K562 (cell line): ENCODE measurements at regions of chr12 and their contacts with region 1.

Region 1: GRCh38 chr12:48189331-48190125 is 6.1 kb downstream of the CCDC184 start:
- DNase-seq: peak; percentile 68 to 84 (median 68)
- ATAC-seq: peak; percentile 87
- H3K4me3 ChIP-seq: no peak overlapping the region
- H3K27ac ChIP-seq: no peak overlapping the region
- H3K4me1 ChIP-seq: peaks cover 0 to 1% of the 10 kb centered on the region in 2 experiments; a peak in 2 of 5 replicates
- H3K27me3 ChIP-seq: peaks cover 20 to 26% of the 10 kb centered on the region in 2 experiments; a peak in 4 of 5 replicates
- CTCF ChIP-seq: peak; percentile 78 to 90 (median 81)
- EP300 ChIP-seq: no peak
- POLR2A ChIP-seq: no peak
- RAD21 ChIP-seq: peak; percentile 79 to 90

Region 2: GRCh38 chr12:47949441-47950308 is 239.9 kb before region 1 on chr12:
- CTCF ChIA-PET with region 1: no interaction called
- POLR2A ChIA-PET with region 1: interaction called, 3 read pairs
- in situ Hi-C with region 1: no loop called
- intact Hi-C with region 1: loop called (anchors 2 kb)
- DNase-seq: peak; percentile 83 to 86 (median 84)
- ATAC-seq: peak; percentile 96
- H3K4me3 ChIP-seq: no peak overlapping the region
- H3K27ac ChIP-seq: no peak overlapping the region
- H3K4me1 ChIP-seq: peaks cover 0 to 11% of the 10 kb centered on the region in 2 experiments; a peak in 3 of 5 replicates
- H3K27me3 ChIP-seq: peaks cover 6 to 49% of the 10 kb centered on the region in 2 experiments; a peak in 3 of 5 replicates
- CTCF ChIP-seq: peak; percentile 88 to 92 (median 92)
- EP300 ChIP-seq: no peak
- POLR2A ChIP-seq: no peak
- RAD21 ChIP-seq: peak; percentile 78 to 87

Region 3: DNA sequence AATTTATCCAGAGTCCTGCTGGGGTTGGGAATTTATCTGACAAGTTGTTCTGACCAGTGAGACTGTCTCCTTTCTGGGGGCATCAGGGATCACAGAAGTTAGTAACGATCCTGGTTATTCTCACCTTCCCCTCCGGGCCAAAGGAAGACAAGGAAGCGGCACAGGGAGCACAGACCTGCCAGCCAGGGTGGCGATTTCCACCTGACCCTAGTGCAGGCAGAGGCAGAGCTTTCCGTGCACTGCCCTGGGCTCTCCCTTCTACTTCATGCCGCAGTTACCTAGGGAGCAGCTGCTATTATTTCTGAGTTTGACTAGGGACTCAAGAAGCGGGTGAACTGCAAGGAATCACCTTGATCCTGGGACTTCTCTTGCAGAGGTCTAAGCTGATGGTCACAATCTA is 218.7 kb before region 1 on chr12:
- CTCF ChIA-PET with region 1: no interaction called
- POLR2A ChIA-PET with region 1: no interaction called
- in situ Hi-C with region 1: no loop called
- intact Hi-C with region 1: loop called (anchors 5 kb)
- DNase-seq: no peak
- ATAC-seq: no peak; the same call in 2 of the 3 replicates
- H3K4me3 ChIP-seq: no peak overlapping the region
- H3K27ac ChIP-seq: no peak overlapping the region
- H3K4me1 ChIP-seq: no peaks in the 10 kb centered on the region; a peak in 1 of 5 replicates
- H3K27me3 ChIP-seq: peaks cover 25 to 40% of the 10 kb centered on the region in 2 experiments
- CTCF ChIP-seq: no peak
- EP300 ChIP-seq: no peak
- POLR2A ChIP-seq: no peak
- RAD21 ChIP-seq: no peak

Region 4: DNA sequence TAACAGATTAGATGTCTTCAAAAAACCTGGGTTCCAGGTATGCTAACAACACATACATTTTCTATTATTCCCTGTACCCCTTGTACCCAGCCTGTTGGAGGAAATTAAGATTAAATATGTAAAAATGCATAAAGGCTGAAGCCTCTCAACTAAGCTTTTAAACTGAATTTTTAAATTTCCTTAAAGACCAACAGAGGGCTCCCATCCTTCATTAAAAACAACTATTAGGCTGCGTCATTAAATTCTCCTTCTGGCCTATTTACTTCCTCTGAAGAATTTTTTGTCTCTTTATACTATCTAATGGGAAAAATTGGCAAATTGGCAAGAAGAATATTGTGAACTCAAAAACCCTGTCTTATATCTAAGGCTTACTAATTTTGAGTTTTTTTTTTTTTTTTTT is 105.5 kb before region 1 on chr12:
- CTCF ChIA-PET with region 1: interaction called, 4 read pairs
- POLR2A ChIA-PET with region 1: no interaction called
- in situ Hi-C with region 1: no loop called
- intact Hi-C with region 1: loop called (anchors 1 kb)
- DNase-seq: peak in 1 of 4 experiments; percentile 9
- ATAC-seq: no peak; the same call in 2 of the 3 replicates
- H3K4me3 ChIP-seq: no peak overlapping the region
- H3K27ac ChIP-seq: no peak overlapping the region
- H3K4me1 ChIP-seq: no peaks in the 10 kb centered on the region
- H3K27me3 ChIP-seq: no peaks in the 10 kb centered on the region
- CTCF ChIP-seq: peak in 1 of 3 experiments; percentile 45; a peak in 3 of 6 replicates
- EP300 ChIP-seq: no peak
- POLR2A ChIP-seq: no peak
- RAD21 ChIP-seq: peak in 1 of 2 experiments; percentile 52; a peak in 3 of 4 replicates

Region 5: DNA sequence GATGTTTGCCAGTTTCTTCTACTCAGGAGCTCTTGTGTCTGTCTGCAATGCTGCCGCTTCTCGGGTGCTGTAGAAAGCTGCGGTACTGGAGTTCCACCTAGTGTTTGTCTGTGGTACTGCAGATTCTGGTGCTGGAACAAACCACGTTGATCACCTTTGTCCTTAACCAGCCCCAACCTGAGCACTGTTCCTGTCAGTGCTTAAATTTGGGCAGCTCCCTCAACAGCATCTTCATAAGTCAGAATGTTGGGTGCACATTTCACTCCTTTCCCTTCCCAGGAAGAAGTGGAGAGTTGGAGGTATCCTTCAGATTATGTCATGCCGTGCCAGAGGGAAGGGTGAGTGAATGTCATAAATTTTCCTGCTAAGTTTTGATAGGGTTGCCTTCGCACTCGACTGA is 429.0 kb after region 1 on chr12:
- CTCF ChIA-PET with region 1: interaction called, 3 read pairs
- POLR2A ChIA-PET with region 1: no interaction called
- in situ Hi-C with region 1: no loop called
- intact Hi-C with region 1: loop called (anchors 5 kb)
- DNase-seq: peak; percentile 69 to 83 (median 78)
- ATAC-seq: peak; percentile 99
- H3K4me3 ChIP-seq: no peak overlapping the region
- H3K27ac ChIP-seq: no peak overlapping the region
- H3K4me1 ChIP-seq: no peaks in the 10 kb centered on the region; a peak in 2 of 5 replicates
- H3K27me3 ChIP-seq: no peaks in the 10 kb centered on the region
- CTCF ChIP-seq: peak; percentile 93 to 97 (median 96)
- EP300 ChIP-seq: no peak
- POLR2A ChIP-seq: no peak
- RAD21 ChIP-seq: peak; percentile 98 to 99